Activated CD4-positive, alpha-beta T cell treated with anti-CD3 and anti-CD28 coated beads, Interleukin-2, amount 10 ng/mL, durations not matched to agents 24 days and 14 days (primary cell): ENCODE measurements at regions of chr20 and their contacts with region 1.

Region 1: GRCh38 chr20:41136680-41137613 is at the start of gene PLCG1:
- DNase-seq: peak; percentile 96
- H3K4me3 Mint-ChIP-seq: peak within 1 kb of the TSS; percentile 96
- H3K27ac Mint-ChIP-seq: peak within 1 kb of the TSS; percentile 95
- H3K4me1 Mint-ChIP-seq: peaks cover 57% of the 10 kb centered on the region
- H3K27me3 Mint-ChIP-seq: no peaks in the 10 kb centered on the region
- total RNA-seq, gene PLCG1: 246 and 255 TPM in 2 replicates

Region 2: GRCh38 chr20:41028348-41029148 is 108.4 kb before region 1 on chr20 and contains the start of gene TOP1:
- intact Hi-C with region 1: loop called (anchors 1 kb)
- DNase-seq: peak; percentile 100
- H3K4me3 Mint-ChIP-seq: peak within 1 kb of the TSS; percentile 84
- H3K27ac Mint-ChIP-seq: peak within 1 kb of the TSS; percentile 95
- H3K4me1 Mint-ChIP-seq: peaks cover 42% of the 10 kb centered on the region
- H3K27me3 Mint-ChIP-seq: no peaks in the 10 kb centered on the region
- total RNA-seq, gene TOP1: 117 TPM in 2 replicates

Region 3: DNA sequence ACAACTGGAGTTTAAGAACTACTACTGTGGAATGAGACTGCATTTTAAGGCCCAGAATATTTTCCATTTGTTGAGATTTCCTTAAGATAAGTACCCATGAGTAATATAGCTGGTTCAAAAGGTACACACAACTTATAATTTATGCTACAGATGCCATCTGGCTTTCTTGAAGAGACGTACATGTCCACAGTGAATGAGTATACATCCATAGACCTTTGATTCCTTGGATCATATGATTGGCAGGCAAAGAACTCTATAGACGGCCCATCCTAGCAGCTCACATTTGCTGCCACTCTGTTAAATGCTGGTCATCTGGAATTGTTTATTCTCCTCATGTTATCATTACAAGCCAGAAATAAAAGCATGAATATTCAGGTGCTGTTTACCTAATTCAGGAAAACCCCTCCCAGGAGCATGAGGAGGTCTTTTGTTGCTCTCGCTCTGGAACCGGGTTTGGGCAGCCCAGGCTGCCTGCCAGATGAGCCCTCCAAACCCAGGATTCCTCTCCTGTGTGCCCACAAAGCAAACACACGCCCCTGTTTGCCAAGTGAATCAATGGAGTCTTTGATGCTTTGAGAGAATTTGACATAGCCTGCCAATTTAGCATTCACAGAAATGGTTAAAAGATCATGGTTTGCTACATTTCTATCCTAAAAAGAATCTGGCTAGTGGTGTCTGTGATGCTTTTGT is 17.3 kb before region 1 on chr20:
- intact Hi-C with region 1: no loop called
- DNase-seq: peak; percentile 50
- H3K4me3 Mint-ChIP-seq: no peak overlapping the region
- H3K27ac Mint-ChIP-seq: peak overlapping the region; percentile 35
- H3K4me1 Mint-ChIP-seq: peaks cover 17% of the 10 kb centered on the region
- H3K27me3 Mint-ChIP-seq: no peaks in the 10 kb centered on the region

Region 4: GRCh38 chr20:41161886-41162285 is 24.9 kb after region 1 on chr20:
- intact Hi-C with region 1: loop called (anchors 1 kb)
- DNase-seq: no peak
- H3K4me3 Mint-ChIP-seq: no peak overlapping the region
- H3K27ac Mint-ChIP-seq: peak overlapping the region; percentile 61
- H3K4me1 Mint-ChIP-seq: peaks cover 66% of the 10 kb centered on the region
- H3K27me3 Mint-ChIP-seq: peaks cover 2% of the 10 kb centered on the region

Region 5: DNA sequence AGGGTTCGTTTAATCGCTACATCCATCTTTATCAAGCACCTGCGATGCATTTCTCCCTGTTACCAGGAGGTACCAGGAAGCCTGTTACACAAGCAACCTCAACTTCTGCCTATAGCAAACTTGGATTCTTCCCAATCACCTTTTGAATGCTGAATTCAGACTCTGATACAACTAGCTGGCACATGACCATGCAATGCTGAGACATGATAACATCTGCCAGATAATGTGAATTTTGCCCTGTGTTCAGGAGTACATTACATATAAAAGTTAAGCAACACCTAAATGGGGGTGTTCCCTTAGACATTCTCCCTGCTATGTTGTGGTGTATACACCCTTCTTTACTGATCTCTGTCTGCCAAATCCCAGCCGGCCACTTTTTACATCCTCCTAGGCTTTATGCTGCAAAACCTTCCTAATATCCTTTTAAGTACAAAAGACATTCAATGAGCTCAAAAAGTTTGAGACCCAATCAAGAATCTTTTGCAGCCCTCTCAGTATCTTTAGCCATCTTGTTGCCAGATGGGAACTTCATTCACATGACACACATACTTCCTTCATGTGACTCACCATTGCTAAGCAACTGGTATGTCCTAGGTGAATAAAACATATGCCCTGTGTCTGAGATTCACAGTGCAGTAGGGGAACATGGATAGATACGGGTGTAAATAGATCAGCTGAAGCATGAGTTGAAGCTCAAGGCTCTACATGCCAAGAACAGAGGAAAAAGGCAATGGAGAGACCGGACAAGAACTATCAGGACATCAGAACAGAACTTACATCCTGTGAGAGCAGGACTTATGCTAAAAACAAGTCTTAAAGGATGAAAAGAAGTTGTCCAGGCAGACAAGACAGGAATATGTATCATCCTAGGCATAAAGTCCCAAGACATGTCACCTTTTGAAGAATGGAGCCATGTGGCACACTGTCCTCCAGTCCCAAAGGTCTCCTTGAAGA is 96.3 kb after region 1 on chr20:
- intact Hi-C with region 1: loop called (anchors 1 kb)
- DNase-seq: no peak
- H3K4me3 Mint-ChIP-seq: peak overlapping the region; percentile 28
- H3K27ac Mint-ChIP-seq: peak overlapping the region; percentile 3
- H3K4me1 Mint-ChIP-seq: peaks cover 28% of the 10 kb centered on the region
- H3K27me3 Mint-ChIP-seq: no peaks in the 10 kb centered on the region

Region 6: DNA sequence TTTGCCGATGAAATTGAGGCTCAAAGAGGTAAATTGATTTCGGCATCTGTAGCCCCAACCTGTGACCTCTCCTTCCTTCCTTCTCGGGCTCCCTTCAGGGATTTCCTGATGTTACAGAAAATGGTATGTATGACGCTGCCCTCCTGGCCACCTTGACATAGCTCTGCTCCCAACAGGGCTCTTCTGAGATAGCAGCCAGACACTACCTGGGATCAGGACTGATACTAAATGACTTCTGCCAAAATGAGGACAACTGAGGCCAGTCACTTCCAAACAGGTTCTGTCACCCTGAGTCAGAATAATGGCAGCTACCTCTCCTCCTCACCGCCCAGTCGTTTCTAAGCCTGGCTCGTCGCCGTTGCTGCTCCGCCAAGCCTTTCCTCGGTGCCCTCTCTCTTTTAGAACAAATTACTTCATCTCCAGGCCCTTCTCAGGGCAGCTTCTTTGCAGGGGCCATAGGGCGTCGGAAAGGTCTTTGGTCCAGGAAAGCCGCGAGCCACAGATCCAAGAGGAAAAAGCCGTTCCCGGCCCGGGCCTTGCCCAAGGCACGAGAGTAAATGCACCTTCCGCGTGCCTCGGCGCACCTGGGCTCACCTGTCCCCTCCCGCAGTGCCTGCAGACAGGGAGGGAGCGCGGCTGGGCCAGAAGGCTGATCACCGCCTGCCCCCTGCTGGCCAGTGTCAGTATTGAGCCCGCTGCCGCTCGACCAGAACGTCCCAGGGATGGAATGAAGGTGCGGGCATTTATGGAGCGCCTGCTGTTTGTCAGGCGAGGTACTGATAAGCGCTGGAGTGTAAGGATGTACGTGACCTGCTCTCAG is 202.8 kb after region 1 on chr20:
- intact Hi-C with region 1: loop called (anchors 1 kb)
- DNase-seq: peak; percentile 96
- H3K4me3 Mint-ChIP-seq: peak overlapping the region; percentile 84
- H3K27ac Mint-ChIP-seq: peak overlapping the region; percentile 43
- H3K4me1 Mint-ChIP-seq: peaks cover 10% of the 10 kb centered on the region
- H3K27me3 Mint-ChIP-seq: peaks cover 10% of the 10 kb centered on the region

Region 7: GRCh38 chr20:41693136-41693979 is 556.4 kb after region 1 on chr20:
- intact Hi-C with region 1: loop called (anchors 10 kb)
- DNase-seq: peak; percentile 93
- H3K4me3 Mint-ChIP-seq: peak overlapping the region; percentile 91
- H3K27ac Mint-ChIP-seq: peak overlapping the region; percentile 97
- H3K4me1 Mint-ChIP-seq: peaks cover 20% of the 10 kb centered on the region
- H3K27me3 Mint-ChIP-seq: peaks cover 2% of the 10 kb centered on the region